Lower leg skin (tissue), 4 donors: ENCODE measurements at regions of chr6 and their contacts with region 1.

Region 1: GRCh38 chr6:144013486-144013909 is 5.4 kb upstream of the PLAGL1 start:
- DNase-seq: peak; percentile 58 to 93
- H3K4me3 ChIP-seq: no peak overlapping the region
- CTCF ChIP-seq: peak in 1 of 3 donors; percentile 51
- POLR2A ChIP-seq: no peak

Region 2: DNA sequence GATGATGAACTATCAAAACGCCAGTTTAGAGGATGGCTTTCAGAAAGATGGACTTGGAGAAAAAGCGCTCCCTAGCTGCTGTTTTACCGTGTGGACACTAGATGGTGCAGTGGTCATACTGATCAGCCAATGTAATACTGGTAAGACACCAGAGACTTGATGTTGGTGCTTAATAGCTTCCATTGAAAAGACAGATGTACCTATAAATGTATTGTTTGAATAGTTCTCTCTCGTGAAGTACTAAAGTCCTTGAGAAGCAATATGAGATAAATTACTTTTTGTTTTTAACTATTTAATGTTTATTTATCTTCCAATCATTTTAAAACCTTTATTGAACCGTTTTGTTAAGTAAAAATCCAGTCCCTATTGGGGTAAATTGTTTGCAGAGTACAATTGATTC is 438.1 kb before region 1 on chr6:
- intact Hi-C with region 1: loop called (anchors 5 kb)
- DNase-seq: peak in 1 of 2 donors; percentile 68
- H3K4me3 ChIP-seq: no peak overlapping the region
- CTCF ChIP-seq: peak in 1 of 3 donors; percentile 77
- POLR2A ChIP-seq: no peak

Region 3: GRCh38 chr6:144190593-144190992 is 177.1 kb after region 1 on chr6:
- intact Hi-C with region 1: no loop called
- DNase-seq: no peak
- H3K4me3 ChIP-seq: no peak overlapping the region
- CTCF ChIP-seq: no peak
- POLR2A ChIP-seq: no peak